Transverse colon (tissue), 4 donors: ENCODE measurements at regions of chr3 and their contacts with region 1.

Region 1: GRCh38 chr3:188154014-188154808 is at the start of gene LPP:
- DNase-seq: peak; percentile 85
- H3K4me3 ChIP-seq: peak within 1 kb of the TSS; percentile 61 to 87 (median 78)
- H3K27ac ChIP-seq: peak within 1 kb of the TSS; percentile 96 to 98 (median 97)
- H3K4me1 ChIP-seq: peaks cover 44 to 63% (median 57%) of the 10 kb centered on the region in 4 donors
- H3K27me3 ChIP-seq: no peaks in the 10 kb centered on the region
- CTCF ChIP-seq: peak in 1 of 5 experiments; percentile 15
- EP300 ChIP-seq: no peak
- POLR2A ChIP-seq: peak; percentile 68
- total RNA-seq, gene LPP: 207 to 592 (median 406) TPM

Region 2: DNA sequence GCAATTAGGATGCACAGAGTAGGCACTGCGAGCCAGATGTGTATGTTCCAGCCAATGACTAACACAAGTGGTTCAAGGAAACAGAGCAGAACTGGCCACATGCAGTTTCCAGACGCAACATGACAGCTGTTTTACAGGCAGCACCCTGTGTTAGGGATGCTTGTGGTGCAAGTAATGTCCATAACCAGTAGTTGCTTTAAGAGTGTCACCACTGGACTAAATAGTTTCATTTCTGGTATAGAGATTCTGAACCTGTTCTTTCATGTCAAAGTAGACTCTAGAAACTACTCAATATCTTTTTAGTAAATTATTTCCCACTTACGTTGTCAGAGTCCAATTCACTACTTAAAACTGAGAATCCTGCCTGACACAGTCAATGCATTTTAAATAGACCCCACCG is 14.7 kb before region 1 on chr3:
- in situ Hi-C with region 1: no loop called
- intact Hi-C with region 1: no loop called
- DNase-seq: no peak
- H3K4me3 ChIP-seq: no peak overlapping the region
- H3K27ac ChIP-seq: no peak overlapping the region
- H3K4me1 ChIP-seq: peaks cover 0 to 3% (median 0%) of the 10 kb centered on the region in 4 donors
- H3K27me3 ChIP-seq: no peaks in the 10 kb centered on the region
- CTCF ChIP-seq: no peak
- EP300 ChIP-seq: no peak
- POLR2A ChIP-seq: no peak

Region 3: GRCh38 chr3:188220988-188221818 is 67.0 kb after region 1 on chr3:
- in situ Hi-C with region 1: no loop called
- intact Hi-C with region 1: loop called (anchors 5 kb)
- DNase-seq: peak; percentile 45
- H3K4me3 ChIP-seq: no peak overlapping the region
- H3K27ac ChIP-seq: peak overlapping the region; percentile 85 to 92 (median 86)
- H3K4me1 ChIP-seq: peaks cover 41 to 96% (median 84%) of the 10 kb centered on the region in 4 donors
- H3K27me3 ChIP-seq: no peaks in the 10 kb centered on the region
- CTCF ChIP-seq: no peak
- EP300 ChIP-seq: peak; percentile 99
- POLR2A ChIP-seq: peak; percentile 4

Region 4: DNA sequence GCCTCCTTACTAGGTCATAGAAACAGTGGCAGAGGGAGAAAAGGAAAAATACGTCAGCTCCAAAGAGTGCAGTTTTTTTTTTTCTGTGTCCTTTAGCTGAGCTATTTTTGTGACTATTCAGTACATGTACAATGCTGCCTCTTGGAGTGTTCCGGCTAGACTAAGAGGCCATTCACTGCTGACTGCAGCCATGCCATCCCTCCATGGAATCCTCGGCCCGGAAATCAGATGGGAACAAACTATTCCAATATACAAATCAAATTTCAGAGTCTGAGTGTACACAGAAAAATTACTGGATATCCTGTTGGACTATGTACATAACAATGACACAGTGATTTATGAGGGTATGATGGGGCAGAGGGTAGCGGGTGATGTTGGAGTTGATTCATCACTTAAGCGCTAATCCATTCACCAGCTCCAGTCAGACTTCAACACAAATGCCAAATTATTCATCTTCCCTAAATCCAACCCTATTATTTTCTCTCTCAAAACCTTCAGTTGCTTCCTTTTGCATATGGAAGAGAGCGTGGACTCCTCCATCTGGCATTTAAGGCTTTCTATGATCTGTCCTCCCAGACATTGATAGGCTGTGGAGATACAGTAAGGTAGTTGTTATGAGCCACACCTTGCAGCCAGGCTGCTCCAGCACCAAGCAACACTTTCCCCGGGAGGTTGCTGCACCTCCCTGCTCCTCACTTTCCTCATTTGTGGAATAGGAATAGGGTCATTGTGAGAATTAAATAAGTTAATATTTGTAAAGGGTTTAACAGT is 108.9 kb after region 1 on chr3:
- in situ Hi-C with region 1: no loop called
- intact Hi-C with region 1: loop called (anchors 2 kb)
- DNase-seq: no peak
- H3K4me3 ChIP-seq: no peak overlapping the region
- H3K27ac ChIP-seq: peak overlapping the region; percentile 82 to 90 (median 86)
- H3K4me1 ChIP-seq: peaks cover 38 to 98% (median 74%) of the 10 kb centered on the region in 4 donors
- H3K27me3 ChIP-seq: no peaks in the 10 kb centered on the region
- CTCF ChIP-seq: no peak
- EP300 ChIP-seq: peak; percentile 74
- POLR2A ChIP-seq: no peak

Region 5: GRCh38 chr3:188954590-188955208 is 800.5 kb after region 1 on chr3:
- in situ Hi-C with region 1: no loop called
- intact Hi-C with region 1: loop called (anchors 10 kb)
- DNase-seq: peak; percentile 87
- H3K4me3 ChIP-seq: no peak overlapping the region
- H3K27ac ChIP-seq: peak overlapping the region in 1 of 4 donors; percentile 13
- H3K4me1 ChIP-seq: peaks cover 2 to 22% (median 18%) of the 10 kb centered on the region in 4 donors
- H3K27me3 ChIP-seq: no peaks in the 10 kb centered on the region
- CTCF ChIP-seq: peak; percentile 88 to 96 (median 93)
- EP300 ChIP-seq: no peak
- POLR2A ChIP-seq: no peak